Activated CD4-positive, alpha-beta T cell treated with anti-CD3 and anti-CD28 coated beads, Interleukin-2, amount 10 ng/mL, durations not matched to agents 24 days and 14 days (primary cell): ENCODE measurements at regions of chrX and their contacts with region 1.

Region 1: GRCh38 chrX:103686199-103687072 is at the start of gene MORF4L2:
- DNase-seq: peak; percentile 95
- H3K4me3 Mint-ChIP-seq: no peak within 1 kb of the TSS
- H3K27ac Mint-ChIP-seq: peak within 1 kb of the TSS; percentile 91
- H3K4me1 Mint-ChIP-seq: peaks cover 8% of the 10 kb centered on the region
- H3K27me3 Mint-ChIP-seq: no peaks in the 10 kb centered on the region
- total RNA-seq, gene MORF4L2: 253 and 262 TPM in 2 replicates

Region 2: DNA sequence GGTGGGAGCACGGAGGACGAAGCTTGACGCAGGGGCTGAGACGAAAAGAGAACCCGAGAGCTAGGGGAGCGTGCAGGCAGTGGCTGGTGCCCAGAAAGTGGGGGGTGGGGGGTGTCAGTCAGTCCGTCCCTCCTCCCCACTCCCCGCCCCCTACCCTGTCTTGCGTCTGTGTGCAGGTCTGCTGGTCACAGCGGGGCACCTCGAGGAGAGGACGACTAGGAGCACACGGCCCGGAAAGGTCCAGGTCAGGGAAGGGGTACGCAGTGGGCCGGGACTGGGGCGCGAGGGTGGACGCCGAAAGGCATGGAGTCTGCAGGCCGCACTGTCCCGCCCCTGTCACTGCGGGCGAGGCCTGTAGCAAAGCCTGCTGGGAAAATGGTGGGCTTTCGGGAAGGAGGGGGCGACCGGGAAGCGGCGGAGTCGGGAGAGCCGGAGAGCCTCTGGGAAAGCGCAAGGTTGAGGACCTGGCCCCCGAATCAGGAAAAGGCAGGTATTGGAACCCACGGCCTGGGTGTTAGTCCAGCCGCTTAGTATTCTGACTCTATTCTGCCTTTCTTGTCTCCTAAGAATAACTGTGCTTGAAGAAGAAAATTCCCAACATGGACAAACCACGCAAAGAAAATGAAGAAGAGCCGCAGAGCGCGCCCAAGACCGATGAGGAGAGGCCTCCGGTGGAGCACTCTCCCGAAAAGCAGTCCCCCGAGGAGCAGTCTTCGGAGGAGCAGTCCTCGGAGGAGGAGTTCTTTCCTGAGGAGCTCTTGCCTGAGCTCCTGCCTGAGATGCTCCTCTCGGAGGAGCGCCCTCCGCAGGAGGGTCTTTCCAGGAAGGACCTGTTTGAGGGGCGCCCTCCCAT is 56.9 kb before region 1 on chrX:
- intact Hi-C with region 1: loop called (anchors 5 kb)
- DNase-seq: peak; percentile 60
- H3K4me3 Mint-ChIP-seq: peak overlapping the region; percentile 88
- H3K27ac Mint-ChIP-seq: peak overlapping the region; percentile 72
- H3K4me1 Mint-ChIP-seq: peaks cover 7% of the 10 kb centered on the region
- H3K27me3 Mint-ChIP-seq: no peaks in the 10 kb centered on the region

Region 3: DNA sequence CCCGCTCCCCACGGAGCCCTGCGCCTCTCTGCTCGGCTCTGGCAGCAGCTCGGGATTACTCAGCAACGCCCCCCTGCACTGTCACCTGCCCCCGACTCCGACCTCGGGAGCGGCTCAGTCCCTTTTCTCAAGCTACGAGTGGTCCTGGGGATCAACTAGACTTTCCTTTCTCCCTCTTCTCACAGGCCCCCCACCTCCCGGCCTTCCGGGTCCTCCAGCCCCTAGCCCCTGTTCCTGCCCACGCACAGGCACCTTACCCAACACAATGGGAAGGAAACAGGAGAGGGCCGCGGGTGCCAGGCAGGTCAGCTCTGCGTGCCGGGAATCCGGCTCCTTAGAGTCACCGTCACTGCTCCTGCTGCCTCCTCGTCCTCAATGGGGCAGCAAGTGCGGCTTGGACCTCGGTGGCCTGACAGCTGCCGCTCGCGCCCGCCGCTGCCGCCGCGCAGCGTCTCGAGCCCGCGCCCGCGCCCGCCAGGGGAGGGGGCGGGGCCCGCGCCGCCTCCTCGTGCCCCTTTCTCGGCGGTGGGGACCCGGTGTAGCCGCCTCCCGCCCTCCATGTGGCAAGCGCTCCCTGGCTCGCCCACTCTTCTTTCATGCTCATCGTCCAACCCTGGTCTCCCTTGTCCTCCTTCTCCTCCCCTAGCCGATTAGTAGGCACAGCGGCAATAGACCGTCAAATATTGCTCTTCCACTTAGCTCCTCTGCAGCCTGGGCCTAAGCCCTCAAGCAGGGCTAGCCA is 145.5 kb after region 1 on chrX and contains the start of gene RAB9B:
- intact Hi-C with region 1: loop called (anchors 5 kb)
- DNase-seq: peak; percentile 83
- H3K4me3 Mint-ChIP-seq: peak within 1 kb of the TSS; percentile 83
- H3K27ac Mint-ChIP-seq: peak within 1 kb of the TSS; percentile 65
- H3K4me1 Mint-ChIP-seq: peaks cover 4% of the 10 kb centered on the region
- H3K27me3 Mint-ChIP-seq: peaks cover 15% of the 10 kb centered on the region
- total RNA-seq, gene RAB9B: 0.17 and 0.35 TPM in 2 replicates

Region 4: GRCh38 chrX:103932133-103932532 is 245.7 kb after region 1 on chrX:
- intact Hi-C with region 1: loop called (anchors 5 kb)
- DNase-seq: no peak
- H3K4me3 Mint-ChIP-seq: no peak overlapping the region
- H3K27ac Mint-ChIP-seq: peak overlapping the region; percentile 51
- H3K4me1 Mint-ChIP-seq: peaks cover 3% of the 10 kb centered on the region
- H3K27me3 Mint-ChIP-seq: no peaks in the 10 kb centered on the region

Region 5: DNA sequence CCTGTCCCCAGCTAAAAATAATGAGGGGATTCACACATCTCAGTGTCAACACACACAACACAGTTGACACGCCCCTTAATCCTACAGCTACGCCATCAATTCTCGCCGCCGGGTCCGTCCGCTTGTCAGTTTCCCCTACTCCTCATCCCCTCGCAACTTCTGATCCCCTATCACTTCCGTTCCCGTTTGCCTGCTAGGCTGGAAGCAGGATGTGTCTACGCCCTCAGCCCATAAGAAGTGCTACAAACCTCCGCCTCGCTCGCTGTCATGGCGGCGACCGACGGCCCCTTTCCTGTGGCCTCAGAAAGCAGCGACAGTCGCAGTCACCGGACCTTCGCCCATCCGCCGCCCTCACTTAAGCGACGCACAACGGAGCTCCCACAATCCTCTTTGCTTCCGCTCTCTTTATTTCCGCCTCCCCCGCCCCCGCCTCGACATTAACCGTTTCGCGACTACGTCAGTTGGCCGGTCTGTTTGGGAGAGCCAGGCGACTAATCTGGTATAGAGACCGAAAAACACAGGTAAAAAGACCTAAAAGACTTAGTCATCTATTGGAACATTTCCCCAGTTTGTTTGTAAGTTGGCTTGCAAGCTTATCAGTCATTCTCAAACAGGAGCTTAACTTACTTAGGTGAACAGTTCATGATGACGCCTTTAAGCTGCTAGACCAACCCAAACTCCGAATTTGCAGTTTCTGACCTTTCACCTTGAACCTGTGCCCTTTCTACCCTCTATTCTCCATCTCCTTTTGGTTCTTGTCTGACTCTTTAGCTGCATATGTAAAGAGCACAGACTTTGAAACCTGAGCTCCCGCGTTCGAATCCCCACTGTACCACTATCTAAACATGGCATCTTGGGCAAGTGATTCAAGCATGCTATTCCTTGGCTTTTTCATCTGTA is 470.4 kb after region 1 on chrX and contains the start of gene SLC25A53:
- intact Hi-C with region 1: loop called (anchors 1 kb)
- DNase-seq: peak; percentile 92
- H3K4me3 Mint-ChIP-seq: peak within 1 kb of the TSS; percentile 98
- H3K27ac Mint-ChIP-seq: peak within 1 kb of the TSS; percentile 99
- H3K4me1 Mint-ChIP-seq: peaks cover 7% of the 10 kb centered on the region
- H3K27me3 Mint-ChIP-seq: no peaks in the 10 kb centered on the region
- total RNA-seq, gene SLC25A53: 4.2 and 4.3 TPM in 2 replicates